ENCODE measurements at regions of chr13 and their contacts with region 1.

Region 1: GRCh38 chr13:35978603-35979316 is 152.4 kb downstream of the DCLK1 start:
- DNase-seq: peak; percentile 31
- ATAC-seq: no peak
- H3K4me3 Mint-ChIP-seq: no peak overlapping the region
- H3K27ac Mint-ChIP-seq: no peak overlapping the region
- H3K4me1 Mint-ChIP-seq: no peaks in the 10 kb centered on the region
- H3K27me3 Mint-ChIP-seq: peaks cover 3% of the 10 kb centered on the region
- CTCF ChIP-seq: peak; percentile 92

Region 2: DNA sequence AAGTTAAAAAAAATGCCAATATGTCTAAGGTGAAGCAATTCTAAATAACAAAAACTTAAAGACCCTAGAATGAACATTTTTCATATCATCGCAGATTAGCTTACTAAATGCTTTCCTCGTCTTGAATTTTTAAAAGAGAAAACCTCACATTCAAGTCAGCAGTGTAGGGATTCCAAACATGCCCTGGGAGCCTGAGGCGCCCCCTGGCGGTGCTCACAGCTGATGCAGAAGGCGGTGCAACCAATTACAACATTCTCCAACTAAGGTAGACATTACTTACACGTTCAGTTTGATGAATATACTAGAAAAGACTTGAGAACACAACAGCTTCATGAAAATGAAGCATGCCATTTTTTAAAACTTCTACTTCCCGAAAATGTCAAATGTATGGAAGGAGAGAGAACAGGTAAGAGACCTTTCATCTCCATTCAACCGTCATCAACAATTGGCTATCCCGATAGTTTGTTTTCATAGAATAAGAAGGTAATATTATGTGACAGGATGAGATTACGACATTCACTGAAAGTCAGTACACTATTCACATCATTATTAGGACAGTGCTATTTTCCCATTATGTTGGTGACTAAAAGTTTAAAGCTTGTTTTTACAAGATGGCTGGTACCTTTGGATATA is 152.0 kb before region 1 on chr13:
- CTCF ChIA-PET with region 1: no interaction called
- POLR2A ChIA-PET with region 1: no interaction called
- intact Hi-C with region 1: no loop called
- DNase-seq: peak; percentile 17
- ATAC-seq: no peak
- H3K4me3 Mint-ChIP-seq: no peak overlapping the region
- H3K27ac Mint-ChIP-seq: no peak overlapping the region
- H3K4me1 Mint-ChIP-seq: no peaks in the 10 kb centered on the region
- H3K27me3 Mint-ChIP-seq: no peaks in the 10 kb centered on the region
- CTCF ChIP-seq: peak; percentile 31

Region 3: DNA sequence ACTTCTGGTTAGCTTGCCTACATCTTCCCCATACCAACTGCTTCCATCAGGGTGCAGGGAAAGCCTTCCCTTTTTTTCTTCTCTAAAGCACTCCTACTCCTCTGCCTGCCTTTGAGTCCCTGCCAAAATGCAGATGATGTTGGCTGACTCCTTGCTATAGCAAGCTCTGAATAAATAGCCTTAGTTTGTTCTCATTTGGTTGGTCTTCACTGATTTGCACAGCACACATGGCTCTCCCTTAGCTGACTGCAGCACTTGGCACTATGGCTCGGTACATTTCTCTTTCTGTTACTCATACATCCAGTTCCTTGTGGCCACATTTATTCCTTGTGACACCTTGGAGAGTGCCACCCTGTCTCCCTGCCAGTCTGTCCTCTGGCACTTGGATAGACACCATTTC is 97.4 kb before region 1 on chr13:
- CTCF ChIA-PET with region 1: no interaction called
- POLR2A ChIA-PET with region 1: no interaction called
- intact Hi-C with region 1: no loop called
- DNase-seq: no peak
- ATAC-seq: no peak
- H3K4me3 Mint-ChIP-seq: no peak overlapping the region
- H3K27ac Mint-ChIP-seq: no peak overlapping the region
- H3K4me1 Mint-ChIP-seq: no peaks in the 10 kb centered on the region
- H3K27me3 Mint-ChIP-seq: no peaks in the 10 kb centered on the region
- CTCF ChIP-seq: no peak

Region 4: GRCh38 chr13:36275190-36276002 is 296.6 kb after region 1 on chr13:
- CTCF ChIA-PET with region 1: interaction called, 38 read pairs
- POLR2A ChIA-PET with region 1: no interaction called
- intact Hi-C with region 1: loop called (anchors 1 kb)
- DNase-seq: peak; percentile 33
- ATAC-seq: no peak
- H3K4me3 Mint-ChIP-seq: no peak overlapping the region
- H3K27ac Mint-ChIP-seq: no peak overlapping the region
- H3K4me1 Mint-ChIP-seq: no peaks in the 10 kb centered on the region
- H3K27me3 Mint-ChIP-seq: peaks cover 6% of the 10 kb centered on the region
- CTCF ChIP-seq: peak; percentile 61

Measured in activated CD8-positive, alpha-beta T cell treated with anti-CD3 and anti-CD28 coated beads for 36 hours (primary cell).